Naive thymus-derived CD4-positive, alpha-beta T cell (primary cell): ENCODE measurements at regions of chr7 and their contacts with region 1.

Region 1: DNA sequence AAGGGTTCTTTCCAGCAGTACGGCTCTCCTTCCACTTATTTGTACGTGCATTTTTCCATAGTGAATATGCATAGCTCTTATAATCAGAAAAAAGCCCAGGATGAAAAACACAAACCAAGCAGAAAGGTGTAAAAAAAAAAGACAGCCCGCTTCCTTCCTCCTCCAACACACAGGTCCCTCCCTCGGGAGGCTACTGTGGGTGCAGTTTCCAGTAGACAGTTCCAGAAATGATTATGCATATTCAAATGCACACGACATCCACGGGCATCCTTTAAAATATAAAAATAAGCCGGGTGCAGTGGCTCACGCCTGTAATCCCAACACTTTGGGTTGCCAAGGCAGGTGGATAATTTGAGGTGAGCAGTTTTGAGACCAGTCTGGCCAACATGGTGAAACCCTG is 59.9 kb downstream of the TNRC18 start:
- DNase-seq: no peak
- ATAC-seq: no peak
- H3K4me3 ChIP-seq: no peak overlapping the region
- H3K4me3 Mint-ChIP-seq: peak overlapping the region in 1 of 10 donors; percentile 8
- H3K27ac ChIP-seq: no peak overlapping the region
- H3K27ac Mint-ChIP-seq: peak overlapping the region in 2 of 9 donors; percentile 51 to 53
- H3K4me1 ChIP-seq: peaks cover 0 to 5% of the 10 kb centered on the region in 2 donors
- H3K4me1 Mint-ChIP-seq: peaks cover 5 to 20% (median 11%) of the 10 kb centered on the region in 7 donors
- H3K27me3 ChIP-seq: no peaks in the 10 kb centered on the region
- H3K27me3 Mint-ChIP-seq: no peaks in the 10 kb centered on the region

Region 2: GRCh38 chr7:5450549-5451372 is 87.0 kb after region 1 on chr7:
- CTCF ChIA-PET with region 1: interaction called, 9 read pairs
- POLR2A ChIA-PET with region 1: no interaction called
- intact Hi-C with region 1: loop called in 1 of 2 experiments (anchors 1 kb)
- DNase-seq: peak in 6 of 9 donors; percentile 22 to 45 (median 40)
- ATAC-seq: peak; percentile 80
- H3K4me3 ChIP-seq: no peak overlapping the region
- H3K4me3 Mint-ChIP-seq: no peak overlapping the region
- H3K27ac ChIP-seq: no peak overlapping the region
- H3K27ac Mint-ChIP-seq: no peak overlapping the region
- H3K4me1 ChIP-seq: no peaks in the 10 kb centered on the region
- H3K4me1 Mint-ChIP-seq: peaks cover 0 to 7% (median 0%) of the 10 kb centered on the region in 7 donors
- H3K27me3 ChIP-seq: no peaks in the 10 kb centered on the region
- H3K27me3 Mint-ChIP-seq: peaks cover 0 to 7% (median 5%) of the 10 kb centered on the region in 5 donors

Region 3: GRCh38 chr7:5780801-5781496 is 417.2 kb after region 1 on chr7:
- CTCF ChIA-PET with region 1: no interaction called
- POLR2A ChIA-PET with region 1: no interaction called
- intact Hi-C with region 1: no loop called
- DNase-seq: peak in 7 of 9 donors; percentile 12 to 60 (median 30)
- ATAC-seq: peak; percentile 35
- H3K4me3 ChIP-seq: peak overlapping the region; percentile 66
- H3K4me3 Mint-ChIP-seq: peak overlapping the region; percentile 72 to 92 (median 84)
- H3K27ac ChIP-seq: peak overlapping the region; percentile 92
- H3K27ac Mint-ChIP-seq: peak overlapping the region; percentile 66 to 93 (median 88)
- H3K4me1 ChIP-seq: peaks cover 24 to 25% of the 10 kb centered on the region in 2 donors
- H3K4me1 Mint-ChIP-seq: peaks cover 28 to 47% (median 42%) of the 10 kb centered on the region in 7 donors
- H3K27me3 ChIP-seq: no peaks in the 10 kb centered on the region
- H3K27me3 Mint-ChIP-seq: no peaks in the 10 kb centered on the region